Activated CD8-positive, alpha-beta T cell treated with anti-CD3 and anti-CD28 coated beads for 36 hours (primary cell): ENCODE measurements at regions of chr12 and their contacts with region 1.

Region 1: DNA sequence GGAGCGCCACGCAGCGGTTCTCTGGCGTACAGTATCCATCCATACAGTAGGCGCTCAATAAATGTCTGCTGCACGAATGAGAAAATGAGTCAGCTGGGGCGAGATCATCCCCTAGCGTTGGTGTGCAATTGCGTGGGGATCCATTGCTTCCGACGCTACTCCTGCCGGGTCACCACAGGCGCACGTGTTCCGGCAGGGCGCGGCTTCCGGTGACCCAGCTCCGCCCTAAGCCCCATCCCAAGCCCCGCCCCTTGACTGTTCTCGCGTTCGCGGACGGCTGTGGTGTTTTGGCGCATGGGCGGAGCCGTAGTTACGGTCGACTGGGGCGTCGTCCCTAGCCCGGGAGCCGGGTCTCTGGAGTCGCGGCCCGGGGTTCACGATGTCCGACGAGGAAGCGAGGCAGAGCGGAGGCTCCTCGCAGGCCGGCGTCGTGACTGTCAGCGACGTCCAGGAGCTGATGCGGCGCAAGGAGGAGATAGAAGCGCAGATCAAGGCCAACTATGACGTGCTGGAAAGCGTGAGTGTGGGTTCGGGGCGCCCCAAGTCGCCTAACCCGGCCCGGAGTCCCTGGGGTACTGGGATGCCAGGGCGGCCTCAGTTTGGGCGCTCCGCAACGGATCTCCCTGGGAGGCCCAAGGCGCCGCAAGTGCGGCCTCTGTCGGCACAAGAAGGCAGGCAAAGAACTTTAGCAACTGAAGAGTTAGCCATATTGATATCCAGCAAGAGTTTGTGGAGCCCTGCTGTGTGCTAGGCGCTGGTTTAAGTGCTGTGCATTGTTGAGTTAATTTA is at the start of gene PSMD9:
- DNase-seq: peak; percentile 98
- ATAC-seq: peak; percentile 96
- H3K4me3 Mint-ChIP-seq: peak within 1 kb of the TSS; percentile 91
- H3K27ac Mint-ChIP-seq: peak within 1 kb of the TSS; percentile 97
- H3K4me1 Mint-ChIP-seq: peaks cover 39% of the 10 kb centered on the region
- H3K27me3 Mint-ChIP-seq: no peaks in the 10 kb centered on the region
- CTCF ChIP-seq: peak; percentile 32
- total RNA-seq, gene PSMD9: 48.6 to 50.7 TPM

Region 2: GRCh38 chr12:121697098-121697698 is 191.5 kb before region 1 on chr12:
- CTCF ChIA-PET with region 1: interaction called, 4 read pairs
- POLR2A ChIA-PET with region 1: no interaction called
- intact Hi-C with region 1: loop called (anchors 10 kb)
- DNase-seq: peak; percentile 28
- ATAC-seq: peak; percentile 37
- H3K4me3 Mint-ChIP-seq: no peak overlapping the region
- H3K27ac Mint-ChIP-seq: no peak overlapping the region
- H3K4me1 Mint-ChIP-seq: no peaks in the 10 kb centered on the region
- H3K27me3 Mint-ChIP-seq: no peaks in the 10 kb centered on the region
- CTCF ChIP-seq: peak; percentile 75

Region 3: DNA sequence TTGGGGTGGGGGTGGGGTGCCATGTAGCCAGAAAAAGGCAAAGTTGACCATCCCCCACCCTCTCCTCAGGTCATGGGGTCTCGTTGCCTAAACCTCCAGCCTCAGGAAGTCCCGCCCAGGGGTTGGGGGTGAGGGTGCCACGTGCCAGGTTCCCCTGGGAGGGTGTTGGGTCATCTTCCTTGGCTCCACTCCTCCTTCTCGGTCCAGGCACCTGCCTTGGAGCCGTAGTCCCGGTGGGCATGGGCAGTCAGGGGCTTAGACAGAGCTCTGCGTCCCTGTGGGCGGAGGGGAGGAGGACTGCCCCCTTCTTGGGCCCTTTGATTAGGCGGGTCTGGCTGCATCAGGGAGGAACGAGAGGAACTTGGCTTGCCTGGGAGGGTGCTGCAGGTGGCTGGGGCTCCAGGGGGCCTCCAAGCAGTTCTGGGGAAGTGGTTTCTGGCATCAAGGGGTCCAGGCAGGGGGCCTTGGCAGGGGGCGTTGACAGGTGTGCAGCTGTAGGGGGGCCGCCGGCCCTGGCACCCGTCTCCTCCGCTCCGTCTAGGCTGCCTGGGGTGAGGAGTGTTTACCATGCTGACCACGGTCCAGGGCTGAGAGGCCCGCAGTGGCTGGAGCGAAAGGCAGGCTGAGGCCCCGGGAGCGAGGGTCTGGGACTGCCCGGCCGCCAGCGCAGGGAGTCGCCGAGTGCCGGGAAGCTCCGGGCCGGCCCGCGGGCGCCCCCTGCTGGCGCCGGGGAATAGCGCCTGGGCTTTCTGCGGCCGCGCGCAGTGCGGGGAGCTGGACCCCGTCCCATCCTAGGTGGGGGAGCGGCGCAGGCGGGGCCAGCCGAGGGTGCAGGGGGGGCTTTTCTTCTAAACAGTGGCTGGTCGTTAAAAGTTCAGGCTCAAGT is 77.0 kb before region 1 on chr12:
- CTCF ChIA-PET with region 1: interaction called, 21 read pairs
- POLR2A ChIA-PET with region 1: interaction called, 3 read pairs
- intact Hi-C with region 1: no loop called
- DNase-seq: peak; percentile 67
- ATAC-seq: peak; percentile 84
- H3K4me3 Mint-ChIP-seq: peak overlapping the region; percentile 74
- H3K27ac Mint-ChIP-seq: peak overlapping the region; percentile 79
- H3K4me1 Mint-ChIP-seq: peaks cover 37% of the 10 kb centered on the region
- H3K27me3 Mint-ChIP-seq: no peaks in the 10 kb centered on the region
- CTCF ChIP-seq: peak; percentile 99

Region 4: GRCh38 chr12:121839106-121839992 is 49.3 kb before region 1 on chr12:
- CTCF ChIA-PET with region 1: interaction called, 4 read pairs
- POLR2A ChIA-PET with region 1: interaction called, 3 read pairs
- intact Hi-C with region 1: loop called (anchors 2 kb)
- DNase-seq: peak; percentile 100
- ATAC-seq: peak; percentile 98
- H3K4me3 Mint-ChIP-seq: peak overlapping the region; percentile 99
- H3K27ac Mint-ChIP-seq: peak overlapping the region; percentile 92
- H3K4me1 Mint-ChIP-seq: peaks cover 16% of the 10 kb centered on the region
- H3K27me3 Mint-ChIP-seq: no peaks in the 10 kb centered on the region
- CTCF ChIP-seq: peak; percentile 58

Region 5: DNA sequence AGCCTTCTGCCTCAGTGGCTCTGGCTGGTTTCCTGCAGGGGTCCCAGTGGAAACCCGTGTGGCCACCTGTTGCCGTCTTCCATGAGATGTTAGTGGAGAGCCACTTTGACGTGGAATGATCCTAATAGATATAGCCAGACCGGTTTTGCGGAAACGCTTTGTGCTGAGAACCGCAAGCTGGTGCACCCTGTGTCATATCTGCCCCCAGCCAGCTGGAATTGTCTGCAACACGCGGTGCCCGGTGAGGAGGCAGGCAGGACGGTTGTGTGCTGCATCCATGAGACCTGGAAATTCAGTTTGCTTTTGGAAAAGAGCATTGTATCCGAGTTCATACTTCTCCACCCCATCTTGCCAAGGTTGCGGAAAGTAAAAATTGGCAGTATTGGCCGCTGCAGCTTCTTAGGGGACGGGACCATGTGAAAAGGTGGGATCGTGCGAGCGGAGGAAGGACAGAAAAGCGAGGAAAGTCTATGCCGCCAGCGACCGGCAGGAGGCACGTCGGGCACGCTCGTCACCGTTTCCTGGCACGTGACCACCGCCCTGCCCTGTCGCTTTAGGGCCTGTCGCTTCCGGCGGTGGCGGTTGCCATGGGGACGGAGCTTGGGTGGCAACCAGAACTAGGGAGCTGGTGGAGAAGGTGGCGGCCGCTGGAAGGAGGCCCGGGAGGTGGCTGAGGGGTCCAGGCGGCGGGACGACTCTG is 29.5 kb after region 1 on chr12 and contains the start of gene CFAP251:
- CTCF ChIA-PET with region 1: interaction called, 21 read pairs
- POLR2A ChIA-PET with region 1: interaction called, 4 read pairs
- intact Hi-C with region 1: no loop called
- DNase-seq: peak; percentile 99
- ATAC-seq: peak; percentile 98
- H3K4me3 Mint-ChIP-seq: peak within 1 kb of the TSS; percentile 76
- H3K27ac Mint-ChIP-seq: peak within 1 kb of the TSS; percentile 89
- H3K4me1 Mint-ChIP-seq: peaks cover 12% of the 10 kb centered on the region
- H3K27me3 Mint-ChIP-seq: no peaks in the 10 kb centered on the region
- CTCF ChIP-seq: peak; percentile 66
- total RNA-seq, gene CFAP251: 2.0 to 2.9 TPM